ENCODE measurements at regions of chr14 and their contacts with region 1.

Region 1: DNA sequence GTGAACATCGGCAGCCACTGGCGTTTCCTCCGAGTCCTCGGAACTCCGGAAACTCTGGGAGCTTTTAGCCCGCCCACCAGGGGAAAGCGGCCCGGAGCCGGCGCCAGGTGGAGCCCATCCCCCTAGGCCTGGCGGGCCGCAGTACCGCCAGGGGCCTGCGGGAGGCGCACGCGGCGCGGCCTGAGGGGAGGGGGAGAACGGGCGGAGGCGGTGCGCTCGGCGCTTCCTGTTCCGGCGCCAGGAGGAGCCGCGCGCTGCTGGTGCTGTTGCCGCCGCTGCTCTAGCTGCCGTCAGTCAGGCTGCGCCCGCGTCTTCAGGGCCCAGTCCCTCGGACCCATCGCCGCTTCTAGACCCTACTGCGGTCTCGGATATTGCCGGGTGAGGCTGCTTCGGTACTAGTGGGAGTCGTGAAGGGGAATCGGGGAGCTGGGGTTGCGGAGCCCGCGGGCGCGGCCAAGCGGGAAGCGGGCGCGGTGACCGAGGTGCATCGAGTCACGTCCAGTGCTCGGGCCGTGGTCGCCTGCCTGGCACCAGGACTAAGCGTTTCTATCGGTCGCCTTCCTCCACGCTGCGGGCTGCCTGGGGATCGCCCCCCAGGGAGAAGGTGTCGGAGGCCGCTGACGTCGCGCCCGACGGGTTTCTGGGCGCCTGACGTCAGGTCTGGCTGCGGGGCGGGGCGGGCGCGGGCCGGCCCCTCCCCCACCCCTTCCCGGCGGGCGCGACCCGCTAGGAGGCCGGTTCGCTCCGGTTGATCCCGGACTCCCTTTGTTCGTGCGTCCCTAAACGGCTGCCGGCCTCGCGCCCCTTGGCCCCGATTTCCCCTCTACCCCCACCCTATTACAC is at the start of gene MAPK1IP1L:
- DNase-seq: peak; percentile 91
- ATAC-seq: peak; percentile 96
- H3K4me3 Mint-ChIP-seq: peak within 1 kb of the TSS; percentile 80
- H3K27ac Mint-ChIP-seq: peak within 1 kb of the TSS; percentile 84
- H3K4me1 Mint-ChIP-seq: peaks cover 39% of the 10 kb centered on the region
- H3K27me3 Mint-ChIP-seq: no peaks in the 10 kb centered on the region
- total RNA-seq, gene MAPK1IP1L: 105 to 106 TPM

Region 2: DNA sequence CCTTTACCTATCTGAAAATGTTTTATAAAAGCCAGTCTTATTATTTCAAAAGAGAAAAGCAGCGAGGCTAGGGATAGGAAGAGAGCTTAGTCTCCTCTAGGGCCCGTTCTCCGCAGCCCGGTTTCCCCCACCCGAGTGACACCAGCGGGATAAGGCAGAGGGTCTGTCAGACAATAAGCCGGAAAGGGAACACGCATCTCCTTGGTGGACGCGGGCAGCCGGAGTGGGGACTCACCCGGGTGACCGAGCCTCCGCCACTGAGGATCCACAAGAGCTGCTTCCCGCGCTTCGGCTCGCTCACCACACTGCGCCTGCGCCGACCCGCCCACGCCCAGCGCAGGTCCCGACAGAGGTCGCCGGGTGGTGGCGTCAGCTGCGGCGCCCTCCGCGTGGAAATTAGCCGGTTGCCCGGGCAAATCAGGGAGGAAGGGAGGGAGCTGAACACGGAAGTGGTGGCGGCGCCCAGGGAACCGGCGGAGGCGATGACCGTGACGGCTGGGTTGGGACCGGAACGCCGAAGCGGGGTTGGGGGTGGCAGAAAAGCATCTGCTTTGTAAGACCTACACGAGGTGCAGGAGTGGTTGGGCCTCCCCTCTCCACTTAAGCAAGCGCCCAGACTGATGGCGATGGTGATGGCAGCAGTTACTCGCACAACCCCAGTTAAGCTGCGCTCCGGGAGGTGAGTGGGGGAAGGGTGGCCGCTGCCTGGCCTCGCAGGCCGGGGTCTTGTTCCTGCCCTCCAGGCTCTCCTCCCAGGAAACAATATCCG is 24.7 kb before region 1 on chr14 and contains the starts of genes SOCS4 and WDHD1:
- CTCF ChIA-PET with region 1: interaction called, 68 read pairs
- POLR2A ChIA-PET with region 1: interaction called, 82 read pairs
- DNase-seq: peak; percentile 97
- ATAC-seq: peak; percentile 92
- H3K4me3 Mint-ChIP-seq: peak within 1 kb of the TSS; percentile 96
- H3K27ac Mint-ChIP-seq: peak within 1 kb of the TSS; percentile 96
- H3K4me1 Mint-ChIP-seq: peaks cover 49% of the 10 kb centered on the region
- H3K27me3 Mint-ChIP-seq: no peaks in the 10 kb centered on the region
- total RNA-seq, gene SOCS4: 26.7 to 36.5 TPM
- total RNA-seq, gene WDHD1: 45.9 to 46.6 TPM

Region 3: DNA sequence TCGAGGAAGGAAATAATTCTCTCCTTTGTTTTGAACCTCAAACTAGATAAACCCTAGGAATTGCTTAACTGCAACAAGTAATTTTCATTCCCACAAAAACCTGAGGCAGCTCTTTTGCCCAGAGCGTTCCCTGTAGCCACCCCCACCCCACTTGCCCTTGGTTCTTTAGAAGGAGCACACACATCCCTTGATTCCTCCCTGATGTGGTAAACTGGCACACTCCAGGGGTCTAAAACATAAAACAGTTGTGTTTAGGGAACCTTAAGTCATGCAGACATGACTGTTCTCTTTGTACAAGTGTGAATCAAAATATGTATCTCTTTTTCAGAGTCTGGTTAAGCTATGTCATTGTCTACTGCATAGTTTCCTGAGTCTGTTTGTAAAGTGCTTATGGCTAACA is 13.8 kb after region 1 on chr14:
- CTCF ChIA-PET with region 1: interaction called, 29 read pairs
- POLR2A ChIA-PET with region 1: interaction called, 15 read pairs
- DNase-seq: no peak
- ATAC-seq: no peak
- H3K4me3 Mint-ChIP-seq: no peak overlapping the region
- H3K27ac Mint-ChIP-seq: no peak overlapping the region
- H3K4me1 Mint-ChIP-seq: peaks cover 4% of the 10 kb centered on the region
- H3K27me3 Mint-ChIP-seq: no peaks in the 10 kb centered on the region

Region 4: GRCh38 chr14:55077155-55077554 is 25.5 kb after region 1 on chr14:
- CTCF ChIA-PET with region 1: interaction called, 29 read pairs
- POLR2A ChIA-PET with region 1: interaction called, 15 read pairs
- DNase-seq: no peak
- ATAC-seq: peak; percentile 51
- H3K4me3 Mint-ChIP-seq: no peak overlapping the region
- H3K27ac Mint-ChIP-seq: no peak overlapping the region
- H3K4me1 Mint-ChIP-seq: peaks cover 17% of the 10 kb centered on the region
- H3K27me3 Mint-ChIP-seq: peaks cover 4% of the 10 kb centered on the region

Region 5: DNA sequence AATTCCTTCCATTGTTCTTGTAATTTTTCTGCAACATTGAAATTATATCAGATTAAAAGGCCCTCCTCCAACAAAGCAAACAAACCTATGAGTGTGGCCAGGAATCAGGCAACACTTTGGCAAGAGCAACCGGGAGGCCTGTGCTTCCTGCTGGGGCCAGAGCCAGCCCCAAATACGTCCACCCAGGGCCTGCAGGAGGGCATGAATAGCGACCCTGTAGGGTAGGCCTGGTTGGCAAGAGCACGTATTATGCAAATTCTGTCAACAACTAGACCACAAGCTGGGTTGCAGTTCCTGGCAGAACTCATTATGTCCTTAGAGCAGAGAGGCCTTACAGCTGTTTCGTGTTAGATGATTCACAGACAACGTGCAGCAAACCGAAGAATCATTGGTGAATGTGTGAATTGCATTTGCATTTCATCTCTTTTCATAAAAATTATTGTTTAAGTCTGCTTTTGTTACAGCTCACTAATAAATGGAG is 50.5 kb after region 1 on chr14:
- CTCF ChIA-PET with region 1: interaction called, 17 read pairs
- POLR2A ChIA-PET with region 1: interaction called, 7 read pairs
- DNase-seq: peak; percentile 76
- ATAC-seq: peak; percentile 62
- H3K4me3 Mint-ChIP-seq: peak overlapping the region; percentile 68
- H3K27ac Mint-ChIP-seq: peak overlapping the region; percentile 98
- H3K4me1 Mint-ChIP-seq: peaks cover 70% of the 10 kb centered on the region
- H3K27me3 Mint-ChIP-seq: no peaks in the 10 kb centered on the region

Region 6: DNA sequence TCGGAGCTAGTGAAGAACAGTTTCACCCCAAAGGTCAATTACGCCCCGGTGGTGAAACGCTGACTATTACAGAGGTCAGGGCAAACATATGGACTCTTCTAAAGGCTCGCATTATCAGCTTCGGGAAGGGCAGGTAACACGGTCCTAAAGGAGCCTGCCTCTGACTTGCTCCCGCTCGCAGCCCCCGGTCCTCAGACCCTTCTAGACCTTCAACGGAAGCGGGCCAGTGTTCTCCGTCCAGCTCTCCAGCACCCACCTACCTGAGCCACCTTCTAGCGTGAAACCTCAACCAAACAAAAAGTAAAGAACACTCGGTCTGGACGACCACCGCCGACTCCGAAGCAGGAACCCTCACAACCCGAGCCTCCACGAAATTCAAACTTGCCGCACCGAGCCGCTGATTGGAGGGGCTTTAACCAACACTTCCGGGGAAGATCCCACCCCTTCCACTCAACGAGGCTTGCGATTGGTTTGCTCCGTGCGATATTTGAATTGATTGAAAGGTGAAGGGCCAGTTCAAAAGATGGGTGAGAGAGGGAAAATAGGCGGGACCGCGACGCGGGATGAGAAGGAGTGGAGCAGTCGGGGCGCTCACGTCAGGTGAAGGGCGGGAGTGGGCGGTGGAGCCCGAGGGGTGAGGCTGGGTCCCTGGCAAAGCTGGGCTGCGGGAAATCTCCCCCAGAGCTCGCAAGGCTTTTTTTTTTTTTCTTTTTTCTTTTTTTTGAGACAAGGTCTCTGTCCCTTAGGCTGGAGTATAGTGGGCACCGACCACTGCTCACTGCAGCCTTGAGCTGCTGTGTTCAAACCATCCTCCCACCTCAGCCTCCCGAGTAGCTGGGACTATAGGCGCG is 139.8 kb after region 1 on chr14 and contains the start of gene DLGAP5:
- CTCF ChIA-PET with region 1: interaction called, 8 read pairs
- POLR2A ChIA-PET with region 1: interaction called, 15 read pairs
- DNase-seq: peak; percentile 97
- ATAC-seq: peak; percentile 99
- H3K4me3 Mint-ChIP-seq: peak within 1 kb of the TSS; percentile 98
- H3K27ac Mint-ChIP-seq: peak within 1 kb of the TSS; percentile 97
- H3K4me1 Mint-ChIP-seq: peaks cover 36% of the 10 kb centered on the region
- H3K27me3 Mint-ChIP-seq: peaks cover 4% of the 10 kb centered on the region
- total RNA-seq, gene DLGAP5: 110 to 112 TPM

Region 7: DNA sequence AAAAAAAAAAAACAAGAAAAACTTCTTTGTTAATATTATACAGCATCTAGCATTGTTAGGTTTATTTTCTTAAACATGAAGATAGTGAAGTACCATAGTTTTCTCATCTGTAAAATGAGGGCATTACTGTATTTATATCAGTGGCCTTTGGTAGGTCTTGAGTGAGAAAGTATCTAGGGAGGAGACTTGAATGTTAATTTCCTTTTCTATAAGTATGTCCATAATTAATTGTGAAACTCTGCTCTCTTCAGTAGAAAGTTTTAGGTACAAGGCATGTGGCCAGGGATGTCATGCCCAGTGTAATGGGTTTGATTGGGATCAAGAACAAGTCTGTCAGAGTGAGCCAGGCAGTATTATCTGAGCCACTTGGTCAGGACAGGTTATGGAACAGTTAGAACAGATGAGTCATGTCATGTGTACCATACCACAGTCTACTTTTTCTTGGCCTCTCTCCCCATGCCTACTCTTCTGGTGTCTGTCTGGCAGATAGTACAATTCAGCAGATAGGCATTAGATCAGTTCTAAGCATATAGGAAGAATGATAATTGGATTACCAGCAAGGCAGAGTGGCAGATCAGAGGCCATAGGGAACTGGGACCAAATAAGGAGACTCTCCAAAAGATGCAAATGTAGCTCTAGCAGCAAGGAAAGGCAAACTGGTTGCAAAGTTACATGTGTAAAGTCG is 249.9 kb after region 1 on chr14:
- CTCF ChIA-PET with region 1: no interaction called
- POLR2A ChIA-PET with region 1: no interaction called
- DNase-seq: no peak
- ATAC-seq: peak; percentile 64
- H3K4me3 Mint-ChIP-seq: no peak overlapping the region
- H3K27ac Mint-ChIP-seq: no peak overlapping the region
- H3K4me1 Mint-ChIP-seq: peaks cover 35% of the 10 kb centered on the region
- H3K27me3 Mint-ChIP-seq: no peaks in the 10 kb centered on the region

Measured in activated CD8-positive, alpha-beta T cell treated with anti-CD3 and anti-CD28 coated beads, Interleukin-2, amount 10 ng/mL, durations not matched to agents 7 days and 5 days (primary cell).